ENCODE measurements at regions of chr20 and their contacts with region 1.

Region 1: DNA sequence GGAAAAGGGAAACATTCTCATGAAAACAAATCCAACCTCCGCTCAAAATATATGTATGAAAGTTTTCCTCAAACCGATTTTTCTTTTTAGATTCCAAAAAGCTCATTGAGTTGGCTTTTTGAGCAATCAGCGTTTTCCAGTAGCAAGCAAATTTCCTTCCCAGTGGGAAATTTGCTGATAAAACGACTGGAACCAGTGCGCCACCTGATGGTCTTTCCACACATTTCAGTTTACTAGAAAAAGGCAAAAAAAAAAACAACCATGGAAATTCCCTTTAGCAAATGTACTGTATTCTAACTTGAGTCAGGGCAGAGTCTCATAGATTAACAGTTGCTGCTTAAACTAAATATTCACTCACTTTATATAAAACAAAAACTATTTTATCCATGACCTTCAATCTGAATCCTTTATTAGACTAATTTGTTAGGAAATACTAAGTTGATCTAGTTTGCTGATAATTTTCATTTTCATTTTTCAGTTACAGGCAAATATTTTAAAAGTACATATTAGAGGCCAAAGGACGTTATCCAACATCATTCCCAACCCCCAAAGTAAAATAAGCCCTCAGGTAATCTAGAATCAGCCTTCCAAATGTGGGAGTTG is 271.5 kb downstream of the FOXA2 start:
- DNase-seq: no peak
- H3K4me3 ChIP-seq: no peak overlapping the region
- H3K27ac ChIP-seq: no peak overlapping the region
- H3K4me1 ChIP-seq: no peaks in the 10 kb centered on the region
- H3K27me3 ChIP-seq: peaks cover 17% of the 10 kb centered on the region
- CTCF ChIP-seq: peak; percentile 48 to 64 (median 54)
- EP300 ChIP-seq: no peak
- POLR2A ChIP-seq: no peak

Region 2: GRCh38 chr20:21693322-21693721 is 619.5 kb before region 1 on chr20:
- in situ Hi-C with region 1: no loop called
- intact Hi-C with region 1: no loop called
- DNase-seq: no peak
- H3K4me3 ChIP-seq: no peak overlapping the region
- H3K27ac ChIP-seq: no peak overlapping the region
- H3K4me1 ChIP-seq: no peaks in the 10 kb centered on the region
- H3K27me3 ChIP-seq: peaks cover 33% of the 10 kb centered on the region
- CTCF ChIP-seq: no peak
- EP300 ChIP-seq: no peak
- POLR2A ChIP-seq: no peak

Region 3: DNA sequence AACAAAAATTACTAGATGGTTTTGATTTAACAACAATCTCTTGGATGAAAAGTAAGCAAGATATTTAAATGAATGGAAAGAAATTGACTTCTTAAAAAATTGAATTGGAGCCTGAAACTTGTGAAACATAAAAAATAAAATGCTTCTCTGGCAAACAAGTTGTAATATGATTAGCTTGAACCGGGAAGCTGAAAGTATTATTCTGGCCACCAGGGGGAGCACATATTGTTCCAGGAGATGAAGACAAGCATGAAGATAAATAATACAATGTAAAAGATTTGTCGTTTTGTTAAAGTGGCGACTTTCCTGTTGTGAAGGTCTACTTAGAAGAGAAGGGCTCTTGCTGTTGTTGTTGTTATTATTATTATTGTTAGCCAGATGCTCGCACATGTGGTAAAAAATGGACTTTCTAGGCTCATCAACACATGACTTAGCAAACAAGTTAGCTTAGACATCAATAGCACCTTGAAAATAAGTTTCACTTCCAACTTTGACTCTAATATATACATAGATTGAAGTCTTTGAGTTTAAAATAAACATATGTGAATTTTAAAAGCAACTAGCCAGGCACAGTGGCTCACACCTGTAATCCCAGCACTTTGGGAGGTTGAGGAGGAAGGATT is 593.1 kb before region 1 on chr20:
- in situ Hi-C with region 1: loop called in 1 of 4 experiments (anchors 25 kb)
- intact Hi-C with region 1: no loop called
- DNase-seq: peak; percentile 47
- H3K4me3 ChIP-seq: no peak overlapping the region
- H3K27ac ChIP-seq: no peak overlapping the region
- H3K4me1 ChIP-seq: no peaks in the 10 kb centered on the region
- H3K27me3 ChIP-seq: peaks cover 43% of the 10 kb centered on the region
- CTCF ChIP-seq: peak; percentile 55 to 83 (median 75)
- EP300 ChIP-seq: no peak
- POLR2A ChIP-seq: no peak

Region 4: DNA sequence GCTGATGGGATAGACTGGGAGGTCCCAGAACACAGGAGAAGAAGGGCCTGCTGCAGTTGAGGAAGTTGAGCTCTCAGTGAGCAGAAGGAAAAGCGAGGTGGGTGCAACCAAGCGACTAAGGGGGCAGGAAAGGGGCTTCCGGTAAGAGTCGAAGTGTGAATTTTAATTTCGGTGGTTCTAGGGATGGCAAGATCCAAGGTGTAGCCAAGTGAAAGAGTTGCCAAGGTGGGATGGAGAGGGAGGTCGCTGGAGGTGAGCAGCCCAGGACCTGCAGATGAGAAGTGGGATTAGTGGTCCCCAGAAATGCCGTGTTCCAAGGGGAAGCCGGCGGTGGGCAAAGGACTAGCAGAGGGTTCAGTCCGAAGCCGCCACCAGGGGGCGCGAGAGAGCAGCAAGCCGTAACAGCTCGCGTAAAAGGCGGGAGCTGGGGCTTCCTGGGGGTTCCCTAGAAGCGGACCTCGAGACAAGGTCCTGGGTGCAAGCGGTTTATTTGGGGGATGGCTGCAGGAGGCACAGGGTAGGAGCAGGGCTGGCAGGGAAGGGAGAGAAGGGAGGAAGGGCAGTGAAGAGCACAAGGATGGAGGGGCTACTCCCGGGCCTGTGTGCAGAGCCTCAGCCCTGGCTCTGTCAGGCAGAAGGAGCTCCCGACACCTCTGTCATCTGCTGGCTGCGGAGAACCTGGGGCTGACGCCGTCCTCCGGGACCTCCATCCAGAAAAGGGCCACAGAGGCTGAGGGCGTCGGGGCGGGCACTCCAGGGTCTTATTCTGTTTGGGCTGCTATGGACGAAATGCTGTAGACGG is 503.8 kb before region 1 on chr20:
- in situ Hi-C with region 1: loop called in 2 of 4 experiments (anchors 25 kb)
- intact Hi-C with region 1: no loop called
- DNase-seq: peak; percentile 36
- H3K4me3 ChIP-seq: no peak overlapping the region
- H3K27ac ChIP-seq: no peak overlapping the region
- H3K4me1 ChIP-seq: no peaks in the 10 kb centered on the region
- H3K27me3 ChIP-seq: no peaks in the 10 kb centered on the region
- CTCF ChIP-seq: peak; percentile 54 to 74 (median 71)
- EP300 ChIP-seq: no peak
- POLR2A ChIP-seq: no peak

Region 5: GRCh38 chr20:22546344-22546743 is 233.5 kb after region 1 on chr20:
- in situ Hi-C with region 1: no loop called
- intact Hi-C with region 1: no loop called
- DNase-seq: no peak
- H3K4me3 ChIP-seq: no peak overlapping the region
- H3K27ac ChIP-seq: no peak overlapping the region
- H3K4me1 ChIP-seq: no peaks in the 10 kb centered on the region
- H3K27me3 ChIP-seq: no peaks in the 10 kb centered on the region
- CTCF ChIP-seq: no peak
- EP300 ChIP-seq: no peak
- POLR2A ChIP-seq: no peak